ENCODE measurements at regions of chr14 and their contacts with region 1.

Region 1: DNA sequence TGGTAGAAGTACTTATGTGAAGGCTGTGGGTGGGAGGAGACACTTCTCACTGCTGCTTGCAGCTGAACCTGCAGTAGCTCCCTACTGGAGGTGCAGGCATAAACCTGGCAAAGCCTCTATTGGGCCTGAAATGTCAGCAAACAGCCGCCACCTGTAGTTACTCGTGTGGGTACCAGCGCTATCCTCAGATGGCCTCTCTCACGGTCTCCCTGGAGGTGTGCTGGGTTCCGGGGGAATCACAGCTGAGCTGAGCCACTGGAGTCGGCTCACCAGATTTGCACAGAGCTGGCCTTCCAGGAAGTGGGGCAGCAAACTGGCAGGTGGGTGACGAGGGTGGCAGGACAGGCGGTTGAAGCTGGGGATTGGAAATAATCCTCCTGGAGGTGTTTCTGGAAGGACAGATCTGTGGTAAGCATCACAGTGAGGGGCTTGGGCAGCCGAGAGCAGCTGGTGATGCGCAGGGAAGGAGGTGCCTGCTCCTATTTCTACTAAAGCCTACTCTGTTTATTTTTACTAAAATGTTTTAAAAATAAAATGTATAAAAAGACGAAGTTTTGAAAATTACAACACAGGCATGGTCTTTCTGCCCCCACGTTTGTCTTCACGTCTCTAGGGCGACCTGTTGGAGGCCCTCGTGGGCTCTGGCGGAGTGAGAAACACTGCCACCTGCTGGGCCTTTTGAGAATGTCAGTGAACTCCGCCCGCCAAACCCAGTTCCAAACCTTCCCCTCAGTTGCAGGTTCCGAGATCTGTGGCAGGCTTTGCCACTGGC is 67.8 kb upstream of the PLEKHG3 start:
- DNase-seq: peak; percentile 77 to 89
- H3K4me3 ChIP-seq: no peak overlapping the region
- H3K27ac ChIP-seq: no peak overlapping the region
- H3K4me1 ChIP-seq: peaks cover 0 to 13% (median 7%) of the 10 kb centered on the region in 4 donors
- H3K27me3 ChIP-seq: no peaks in the 10 kb centered on the region
- CTCF ChIP-seq: peak in 5 of 7 experiments; percentile 63 to 92 (median 87)
- EP300 ChIP-seq: no peak
- POLR2A ChIP-seq: no peak

Region 2: GRCh38 chr14:64549781-64550620 is 86.4 kb before region 1 on chr14 and contains the start of gene PPP1R36:
- intact Hi-C with region 1: loop called (anchors 10 kb)
- DNase-seq: peak; percentile 69 to 89
- H3K4me3 ChIP-seq: peak within 1 kb of the TSS; percentile 42 to 62 (median 47)
- H3K27ac ChIP-seq: peak within 1 kb of the TSS; percentile 70 to 84 (median 81)
- H3K4me1 ChIP-seq: peaks cover 0 to 26% (median 12%) of the 10 kb centered on the region in 4 donors
- H3K27me3 ChIP-seq: peaks cover 0 to 8% (median 8%) of the 10 kb centered on the region in 3 donors
- CTCF ChIP-seq: no peak
- EP300 ChIP-seq: no peak
- POLR2A ChIP-seq: no peak
- total RNA-seq, gene PPP1R36: 4.1 to 6.2 TPM in 2 of 5 donors, not detected in the others

Region 3: GRCh38 chr14:64573109-64573508 is 63.3 kb before region 1 on chr14:
- intact Hi-C with region 1: no loop called
- DNase-seq: peak in 1 of 2 donors; percentile 74
- H3K4me3 ChIP-seq: no peak overlapping the region
- H3K27ac ChIP-seq: peak overlapping the region in 3 of 5 donors; percentile 31 to 66 (median 52)
- H3K4me1 ChIP-seq: peaks cover 0 to 24% (median 12%) of the 10 kb centered on the region in 4 donors
- H3K27me3 ChIP-seq: no peaks in the 10 kb centered on the region
- CTCF ChIP-seq: no peak
- EP300 ChIP-seq: no peak
- POLR2A ChIP-seq: no peak

Region 4: GRCh38 chr14:65019944-65020566 is 383.7 kb after region 1 on chr14:
- intact Hi-C with region 1: no loop called
- DNase-seq: peak; percentile 41 to 88
- H3K4me3 ChIP-seq: no peak overlapping the region
- H3K27ac ChIP-seq: no peak overlapping the region
- H3K4me1 ChIP-seq: peaks cover 0 to 16% (median 10%) of the 10 kb centered on the region in 4 donors
- H3K27me3 ChIP-seq: no peaks in the 10 kb centered on the region
- CTCF ChIP-seq: peak in 5 of 7 experiments; percentile 39 to 76 (median 59)
- EP300 ChIP-seq: no peak
- POLR2A ChIP-seq: no peak